ENCODE measurements at regions of chr6 and their contacts with region 1.

Region 1: DNA sequence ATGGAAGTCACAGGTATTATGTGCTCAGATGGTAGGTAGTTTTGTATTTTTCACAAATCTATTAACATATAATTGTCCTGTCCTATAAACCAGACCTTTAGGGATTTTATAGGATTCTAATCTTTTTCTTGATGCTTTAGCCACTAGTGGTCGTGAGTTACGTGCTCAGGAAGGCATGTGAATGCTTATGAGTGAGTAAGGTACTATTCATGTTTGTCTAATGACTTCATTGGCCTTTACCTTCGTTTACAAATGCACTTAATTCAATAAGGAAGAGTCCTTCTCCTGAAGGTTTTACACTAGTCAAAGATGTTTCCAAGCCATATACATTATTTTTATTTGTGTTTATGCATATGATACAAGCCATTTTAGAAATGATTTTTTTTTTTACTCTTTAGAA is 23.0 kb downstream of the PACRG start:
- DNase-seq: no peak
- ATAC-seq: no peak
- H3K4me3 ChIP-seq: no peak overlapping the region
- H3K27ac ChIP-seq: no peak overlapping the region
- H3K4me1 ChIP-seq: no peaks in the 10 kb centered on the region
- H3K27me3 ChIP-seq: no peaks in the 10 kb centered on the region
- CTCF ChIP-seq: no peak

Region 2: DNA sequence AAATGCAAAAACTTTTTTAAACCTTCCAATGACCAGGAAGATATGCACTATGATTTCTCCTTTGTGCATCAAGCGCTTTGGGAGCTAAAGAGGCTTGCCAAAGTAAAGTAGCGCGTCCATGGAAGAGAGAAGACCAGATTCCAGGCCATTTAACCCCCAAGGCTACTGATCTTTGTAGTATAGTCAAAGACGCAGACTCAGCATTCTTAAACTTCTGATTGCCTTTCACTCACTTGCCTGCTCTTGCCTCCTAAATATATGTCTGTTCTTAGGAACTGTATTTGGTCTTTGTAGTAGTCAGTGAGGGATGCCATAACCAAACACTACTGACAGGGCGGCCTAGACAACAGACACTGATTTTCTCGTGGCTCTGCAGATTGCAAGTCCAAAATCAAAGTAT is 449.6 kb before region 1 on chr6:
- intact Hi-C with region 1: loop called in 1 of 10 experiments (anchors 5 kb)
- DNase-seq: no peak
- ATAC-seq: no peak
- H3K4me3 ChIP-seq: no peak overlapping the region
- H3K27ac ChIP-seq: no peak overlapping the region
- H3K4me1 ChIP-seq: no peaks in the 10 kb centered on the region
- H3K27me3 ChIP-seq: no peaks in the 10 kb centered on the region
- CTCF ChIP-seq: no peak

Measured in heart right ventricle (tissue), 16 donors.